Dorsolateral prefrontal cortex (tissue), 120 donors: ENCODE measurements at regions of chr12 and their contacts with region 1.

Region 1: GRCh38 chr12:107760809-107761501 is at the start of gene PRDM4:
- DNase-seq: peak; percentile 82 to 96 (median 92)
- H3K4me3 ChIP-seq: peak within 1 kb of the TSS; percentile 68 to 96 (median 85)
- H3K27ac ChIP-seq: peak within 1 kb of the TSS in 55 of 59 donors; percentile 2 to 88 (median 72)
- H3K27me3 ChIP-seq: no peaks in the 10 kb centered on the region
- CTCF ChIP-seq: peak in 53 of 56 donors; percentile 6 to 84 (median 50)
- total RNA-seq, gene PRDM4: 21.5 to 45.7 (median 32.4) TPM

Region 2: GRCh38 chr12:107685360-107686248 is 75.4 kb before region 1 on chr12 and contains the start of gene PWP1:
- intact Hi-C with region 1: loop called (anchors 1 to 5 kb)
- DNase-seq: peak; percentile 85 to 93 (median 92)
- H3K4me3 ChIP-seq: peak within 1 kb of the TSS; percentile 60 to 100 (median 93)
- H3K27ac ChIP-seq: peak within 1 kb of the TSS in 44 of 59 donors; percentile 7 to 92 (median 68)
- H3K27me3 ChIP-seq: peaks cover 0 to 7% (median 0%) of the 10 kb centered on the region in 45 donors
- CTCF ChIP-seq: peak in 38 of 56 donors; percentile 9 to 69 (median 36)
- total RNA-seq, gene PWP1: 14.2 to 42.9 (median 30.0) TPM